ENCODE measurements at regions of chr19 and their contacts with region 1.

Region 1: GRCh38 chr19:38335949-38336637 is 463 bp downstream of the CATSPERG start:
- DNase-seq: peak; percentile 91 to 94 (median 93)
- H3K4me3 ChIP-seq: peak overlapping the region; percentile 97
- H3K4me3 Mint-ChIP-seq: peak overlapping the region; percentile 88 to 97 (median 95)
- H3K27ac ChIP-seq: peak overlapping the region; percentile 90
- H3K27ac Mint-ChIP-seq: peak overlapping the region; percentile 85 to 100 (median 98)
- H3K4me1 ChIP-seq: peaks cover 5% of the 10 kb centered on the region
- H3K4me1 Mint-ChIP-seq: peaks cover 13 to 17% (median 13%) of the 10 kb centered on the region in 3 donors
- H3K27me3 ChIP-seq: no peaks in the 10 kb centered on the region
- H3K27me3 Mint-ChIP-seq: no peaks in the 10 kb centered on the region

Region 2: DNA sequence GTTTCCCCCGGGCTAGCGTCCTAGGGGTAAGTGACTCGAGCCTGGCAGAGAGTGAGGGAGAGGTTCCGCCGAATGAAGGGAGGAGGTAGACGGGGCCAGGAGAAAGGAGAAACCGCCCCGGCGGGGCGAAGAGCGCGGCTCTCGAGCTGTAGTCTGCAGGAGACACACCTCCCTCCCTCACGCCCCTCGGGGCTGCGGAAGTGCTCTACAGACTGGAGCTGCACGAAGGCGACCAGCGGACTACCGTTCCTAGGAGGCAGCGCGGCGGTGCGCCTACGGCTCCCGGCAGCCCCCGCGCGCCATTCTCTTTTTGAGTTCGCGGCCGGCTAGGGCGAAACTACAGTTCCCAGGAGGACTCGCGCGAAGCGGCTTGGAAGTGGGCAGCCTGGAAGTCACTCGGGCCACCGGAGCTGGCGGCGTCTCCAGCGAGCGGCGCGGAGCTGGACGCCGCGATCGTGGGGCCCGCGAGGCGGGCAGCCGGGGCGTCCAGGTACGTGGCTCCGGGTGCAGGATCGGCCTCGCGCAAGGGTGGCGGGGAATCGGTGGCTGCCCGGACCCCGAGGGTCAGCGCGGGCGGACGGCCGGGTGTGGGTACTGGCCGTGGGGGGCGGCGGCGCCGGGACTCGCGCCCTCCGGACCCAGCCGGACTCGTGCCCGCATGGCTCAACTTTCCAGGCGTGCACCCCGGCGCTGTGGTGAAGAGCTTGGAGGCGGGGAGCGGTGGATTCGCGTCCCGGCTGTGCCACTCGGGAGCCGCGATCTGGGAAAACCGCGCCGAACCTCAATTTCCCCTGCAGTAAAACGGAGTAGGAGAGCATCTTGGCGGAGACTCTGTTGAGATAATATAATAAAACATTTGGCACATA is 429.0 kb before region 1 on chr19 and contains the start of gene SIPA1L3:
- CTCF ChIA-PET with region 1: interaction called, 12 read pairs
- POLR2A ChIA-PET with region 1: interaction called, 5 read pairs
- DNase-seq: peak; percentile 86 to 93 (median 89)
- H3K4me3 ChIP-seq: peak within 1 kb of the TSS; percentile 99
- H3K4me3 Mint-ChIP-seq: peak within 1 kb of the TSS; percentile 91 to 98 (median 93)
- H3K27ac ChIP-seq: peak within 1 kb of the TSS; percentile 87
- H3K27ac Mint-ChIP-seq: peak within 1 kb of the TSS; percentile 70 to 98 (median 84)
- H3K4me1 ChIP-seq: peaks cover 21% of the 10 kb centered on the region
- H3K4me1 Mint-ChIP-seq: peaks cover 24 to 40% (median 35%) of the 10 kb centered on the region in 3 donors
- H3K27me3 ChIP-seq: no peaks in the 10 kb centered on the region
- H3K27me3 Mint-ChIP-seq: no peaks in the 10 kb centered on the region
- total RNA-seq, gene SIPA1L3: 11.5 to 14.8 TPM

Region 3: GRCh38 chr19:38243279-38243656 is 92.8 kb before region 1 on chr19:
- CTCF ChIA-PET with region 1: interaction called, 43 read pairs
- POLR2A ChIA-PET with region 1: interaction called, 6 read pairs
- DNase-seq: no peak
- H3K4me3 ChIP-seq: no peak overlapping the region
- H3K4me3 Mint-ChIP-seq: peak overlapping the region in 1 of 7 donors; percentile 73
- H3K27ac ChIP-seq: no peak overlapping the region
- H3K27ac Mint-ChIP-seq: no peak overlapping the region
- H3K4me1 ChIP-seq: no peaks in the 10 kb centered on the region
- H3K4me1 Mint-ChIP-seq: peaks cover 2 to 5% (median 4%) of the 10 kb centered on the region in 3 donors
- H3K27me3 ChIP-seq: no peaks in the 10 kb centered on the region
- H3K27me3 Mint-ChIP-seq: peaks cover 3 to 15% of the 10 kb centered on the region in 2 donors

Region 4: DNA sequence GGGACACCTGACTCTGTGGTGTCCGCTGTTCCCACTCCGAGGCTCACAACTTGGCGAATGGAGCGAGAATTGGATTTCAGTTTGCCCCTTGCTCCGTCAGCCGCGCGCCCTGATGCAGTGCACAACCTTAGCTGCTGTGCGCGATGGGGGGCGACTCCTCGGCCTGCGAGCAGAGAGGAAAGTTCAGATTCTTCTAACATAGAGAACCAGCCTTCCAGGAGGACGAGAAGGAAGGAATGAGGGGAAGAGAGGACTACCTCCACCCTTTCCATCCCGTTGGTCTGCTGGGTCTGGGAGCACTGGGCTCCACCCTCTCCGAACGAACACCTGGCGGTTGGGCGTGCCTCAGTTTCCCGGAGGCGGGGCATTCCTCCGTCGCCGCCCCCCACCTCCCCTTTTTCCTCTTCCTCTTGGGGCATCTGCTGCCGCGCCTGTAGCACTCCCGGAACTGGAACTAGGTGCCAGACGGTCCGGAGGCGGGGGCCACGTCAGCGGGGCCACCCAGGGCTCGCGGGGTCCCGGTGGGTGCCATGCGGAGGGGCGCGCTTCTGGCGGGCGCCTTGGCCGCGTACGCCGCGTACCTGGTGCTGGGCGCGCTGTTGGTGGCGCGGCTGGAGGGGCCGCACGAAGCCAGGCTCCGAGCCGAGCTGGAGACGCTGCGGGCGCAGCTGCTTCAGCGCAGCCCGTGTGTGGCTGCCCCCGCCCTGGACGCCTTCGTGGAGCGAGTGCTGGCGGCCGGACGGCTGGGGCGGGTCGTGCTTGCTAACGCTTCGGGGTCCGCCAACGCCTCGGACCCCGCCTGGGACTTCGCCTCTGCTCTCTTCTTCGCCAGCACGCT is 16.5 kb before region 1 on chr19 and contains the start of gene KCNK6:
- CTCF ChIA-PET with region 1: interaction called, 10 read pairs
- POLR2A ChIA-PET with region 1: no interaction called
- DNase-seq: peak; percentile 38 to 63 (median 41)
- H3K4me3 ChIP-seq: peak within 1 kb of the TSS; percentile 83
- H3K4me3 Mint-ChIP-seq: peak within 1 kb of the TSS; percentile 84 to 92 (median 85)
- H3K27ac ChIP-seq: peak within 1 kb of the TSS; percentile 24
- H3K27ac Mint-ChIP-seq: peak within 1 kb of the TSS; percentile 48 to 94 (median 80)
- H3K4me1 ChIP-seq: peaks cover 48% of the 10 kb centered on the region
- H3K4me1 Mint-ChIP-seq: peaks cover 45 to 66% (median 53%) of the 10 kb centered on the region in 3 donors
- H3K27me3 ChIP-seq: no peaks in the 10 kb centered on the region
- H3K27me3 Mint-ChIP-seq: no peaks in the 10 kb centered on the region
- total RNA-seq, gene KCNK6: 10.1 to 11.1 TPM

Region 5: DNA sequence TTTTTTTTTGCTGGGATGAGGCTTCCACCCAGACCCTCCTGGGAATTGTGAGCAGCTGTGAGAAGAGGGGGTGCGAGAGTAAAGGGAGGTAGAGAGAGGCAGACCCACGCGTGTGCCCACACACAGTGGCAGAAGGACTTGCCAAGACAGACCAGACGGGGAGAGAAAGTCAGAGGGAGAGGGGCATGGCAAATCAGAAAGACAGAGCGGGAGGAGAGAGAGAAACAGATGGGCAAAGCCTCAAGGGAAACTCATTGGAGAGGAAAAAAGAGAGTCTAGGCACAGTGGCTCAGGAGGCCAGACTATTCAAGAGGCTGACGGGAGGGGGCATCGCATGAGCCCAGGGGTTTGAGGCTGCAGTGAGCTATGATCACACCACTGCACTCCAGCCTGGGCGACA is 16.5 kb after region 1 on chr19:
- CTCF ChIA-PET with region 1: no interaction called
- POLR2A ChIA-PET with region 1: no interaction called
- DNase-seq: no peak
- H3K4me3 ChIP-seq: no peak overlapping the region
- H3K4me3 Mint-ChIP-seq: no peak overlapping the region
- H3K27ac ChIP-seq: no peak overlapping the region
- H3K27ac Mint-ChIP-seq: no peak overlapping the region
- H3K4me1 ChIP-seq: no peaks in the 10 kb centered on the region
- H3K4me1 Mint-ChIP-seq: no peaks in the 10 kb centered on the region
- H3K27me3 ChIP-seq: no peaks in the 10 kb centered on the region
- H3K27me3 Mint-ChIP-seq: peaks cover 3 to 5% of the 10 kb centered on the region in 2 donors

Region 6: DNA sequence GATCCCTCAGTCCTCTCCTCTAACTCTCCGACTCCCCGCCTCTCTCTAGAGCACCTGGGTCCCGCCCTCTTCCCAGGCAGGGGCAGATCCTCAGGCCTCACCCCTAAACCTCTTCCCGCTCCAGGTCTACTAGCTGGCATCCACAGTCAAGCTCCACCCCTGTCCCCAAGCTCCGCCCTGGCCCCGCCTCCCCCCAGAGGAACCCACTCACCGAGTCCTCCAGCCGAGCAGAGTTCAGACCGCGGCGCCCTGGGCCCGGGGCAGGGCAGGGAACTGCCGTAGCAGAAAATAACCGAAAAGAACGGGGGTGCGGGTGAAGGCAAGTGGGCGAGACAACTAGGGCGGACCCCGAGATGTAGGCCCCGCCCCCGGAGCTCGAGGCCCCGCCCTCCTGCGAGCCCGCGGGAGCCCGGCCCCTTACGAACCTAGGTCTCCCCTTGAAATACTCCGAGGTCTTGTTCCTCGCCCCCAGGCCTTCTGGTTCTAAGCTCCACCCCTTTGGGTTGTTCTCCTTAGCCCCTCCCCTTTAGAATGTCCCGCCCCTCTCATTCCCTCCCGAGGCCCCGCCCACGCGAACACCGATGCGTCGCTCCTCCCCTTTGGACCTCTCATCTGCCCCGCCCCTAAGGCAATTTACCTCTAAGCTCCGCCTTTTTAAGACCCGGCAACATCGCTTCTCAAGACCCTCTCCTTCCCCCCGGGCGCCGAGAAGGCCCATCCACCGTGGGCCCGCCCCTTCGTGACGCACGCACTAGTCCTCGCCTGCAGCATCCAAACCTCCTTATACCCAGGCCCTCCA is 51.7 kb after region 1 on chr19 and contains the start of gene GGN:
- CTCF ChIA-PET with region 1: no interaction called
- POLR2A ChIA-PET with region 1: no interaction called
- DNase-seq: peak; percentile 68 to 83 (median 71)
- H3K4me3 ChIP-seq: peak within 1 kb of the TSS; percentile 78
- H3K4me3 Mint-ChIP-seq: peak within 1 kb of the TSS; percentile 82 to 95 (median 91)
- H3K27ac ChIP-seq: peak within 1 kb of the TSS; percentile 31
- H3K27ac Mint-ChIP-seq: peak within 1 kb of the TSS; percentile 61 to 97 (median 88)
- H3K4me1 ChIP-seq: peaks cover 24% of the 10 kb centered on the region
- H3K4me1 Mint-ChIP-seq: peaks cover 17 to 28% (median 19%) of the 10 kb centered on the region in 3 donors
- H3K27me3 ChIP-seq: no peaks in the 10 kb centered on the region
- H3K27me3 Mint-ChIP-seq: peaks cover 4 to 9% of the 10 kb centered on the region in 2 donors
- total RNA-seq, gene GGN: 0.15 TPM in 1 of 2 experiments, not detected in the other

Measured in CD8-positive, alpha-beta memory T cell (primary cell).